CD8-positive, alpha-beta T cell (primary cell): ENCODE measurements at regions of chr7 and their contacts with region 1.

Region 1: DNA sequence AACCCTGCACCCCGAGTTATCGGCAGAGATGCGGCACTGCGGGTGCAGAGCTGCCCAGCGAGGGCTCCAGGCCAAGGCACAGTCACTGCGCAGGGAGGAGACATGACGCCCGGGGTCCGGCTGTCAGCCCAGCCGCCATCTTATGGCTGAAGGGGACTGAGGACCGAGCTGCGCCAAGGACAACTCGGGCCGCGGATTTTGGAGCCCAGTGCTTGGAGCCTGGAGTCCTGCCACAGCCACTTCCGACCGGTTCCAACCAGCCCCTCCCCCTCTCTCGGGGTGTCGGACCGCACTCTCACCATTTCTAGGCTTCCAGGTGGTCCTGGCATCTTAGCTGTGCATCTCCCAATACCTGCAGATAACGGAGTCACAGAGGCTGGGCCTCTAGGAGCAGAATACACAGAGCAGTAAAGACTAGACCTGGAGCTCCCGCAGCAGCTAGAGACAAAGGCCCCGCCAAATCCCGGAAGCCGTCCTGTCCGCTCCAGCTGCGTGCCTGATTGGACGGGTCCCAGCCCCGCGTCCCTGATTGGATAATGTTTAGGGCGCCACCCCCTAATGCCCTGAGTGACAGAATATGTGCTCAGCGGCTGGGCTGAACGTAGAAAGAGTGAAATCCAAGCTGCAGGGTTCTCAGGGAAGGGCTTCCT is at the start of gene ZNF680:
- DNase-seq: peak; percentile 78 to 92 (median 89)
- ATAC-seq: peak; percentile 98
- H3K4me3 ChIP-seq: peak within 1 kb of the TSS; percentile 84 to 96
- H3K4me3 Mint-ChIP-seq: peak within 1 kb of the TSS; percentile 99
- H3K27ac ChIP-seq: peak within 1 kb of the TSS; percentile 69 to 71
- H3K27ac Mint-ChIP-seq: peak within 1 kb of the TSS; percentile 97
- H3K4me1 ChIP-seq: peaks cover 10% of the 10 kb centered on the region
- H3K4me1 Mint-ChIP-seq: peaks cover 33% of the 10 kb centered on the region
- H3K27me3 ChIP-seq: no peaks in the 10 kb centered on the region
- H3K27me3 Mint-ChIP-seq: no peaks in the 10 kb centered on the region
- CTCF ChIP-seq: no peak
- total RNA-seq, gene ZNF680: 6.8 to 8.4 TPM

Region 2: DNA sequence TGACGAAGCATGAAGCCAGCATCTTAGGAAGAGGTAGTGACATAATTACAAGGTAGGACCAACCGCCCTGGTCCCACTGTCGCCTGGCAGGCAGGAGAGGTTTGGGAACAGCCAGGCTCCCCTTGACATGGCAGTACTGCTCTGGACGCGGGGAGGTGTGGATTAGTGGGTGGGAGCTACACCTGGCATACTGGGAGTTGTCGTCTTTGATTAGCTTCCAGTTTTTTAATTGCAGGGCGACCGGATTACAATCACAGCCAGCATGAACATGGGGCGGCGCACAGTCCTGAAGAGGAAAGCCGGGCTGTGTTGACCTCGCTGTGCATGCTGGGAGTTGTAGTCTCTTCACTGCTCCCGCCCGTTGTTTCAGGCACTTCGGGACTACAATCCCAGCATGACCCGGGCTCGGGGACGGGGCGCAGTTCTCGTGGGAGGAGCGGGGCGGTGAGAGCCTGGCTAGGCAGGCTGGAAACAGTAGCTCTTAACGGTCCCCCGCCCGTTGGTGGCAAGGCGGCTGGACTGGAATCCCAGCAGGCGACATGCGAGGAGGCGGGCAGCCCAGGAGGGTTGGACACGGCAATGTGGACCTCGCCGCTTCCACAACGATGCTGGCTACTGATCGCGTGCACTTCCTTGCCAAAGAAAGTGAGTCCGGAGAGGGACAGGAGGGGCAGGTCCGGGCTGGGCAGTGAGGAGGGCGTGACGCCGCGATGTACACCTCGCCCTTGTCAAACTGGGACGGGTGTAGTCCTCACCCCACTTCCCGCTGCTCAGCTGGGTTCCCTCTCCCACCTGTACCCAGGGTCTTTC is 662.2 kb before region 1 on chr7:
- CTCF ChIA-PET with region 1: no interaction called
- POLR2A ChIA-PET with region 1: no interaction called
- intact Hi-C with region 1: loop called in 1 of 2 experiments (anchors 10 kb)
- DNase-seq: peak; percentile 82 to 94 (median 88)
- ATAC-seq: peak; percentile 93
- H3K4me3 ChIP-seq: peak overlapping the region; percentile 67 to 98
- H3K4me3 Mint-ChIP-seq: peak overlapping the region; percentile 92
- H3K27ac ChIP-seq: peak overlapping the region; percentile 83 to 96
- H3K27ac Mint-ChIP-seq: peak overlapping the region; percentile 93
- H3K4me1 ChIP-seq: peaks cover 4% of the 10 kb centered on the region
- H3K4me1 Mint-ChIP-seq: peaks cover 6% of the 10 kb centered on the region
- H3K27me3 ChIP-seq: no peaks in the 10 kb centered on the region
- H3K27me3 Mint-ChIP-seq: no peaks in the 10 kb centered on the region
- CTCF ChIP-seq: no peak

Region 3: DNA sequence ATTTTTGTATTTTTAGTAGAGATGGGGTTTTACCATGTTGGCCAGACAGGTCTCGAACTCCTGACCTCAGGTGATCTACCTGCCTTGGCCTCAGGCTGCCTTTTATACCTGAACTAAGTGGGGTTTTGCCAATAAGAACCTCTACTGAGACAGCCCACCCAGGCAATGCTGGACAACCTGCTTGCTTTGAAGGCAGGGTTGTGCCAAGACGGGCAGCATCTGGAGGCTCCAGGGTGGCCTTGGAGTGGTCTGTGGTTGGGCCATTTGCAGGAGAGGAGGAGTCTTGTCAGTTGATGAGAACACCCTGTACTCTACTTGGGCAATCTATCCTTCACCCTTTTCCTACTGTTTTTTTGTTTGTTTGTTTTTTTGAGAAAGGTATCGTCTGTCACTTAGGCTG is 431.1 kb before region 1 on chr7:
- CTCF ChIA-PET with region 1: no interaction called
- POLR2A ChIA-PET with region 1: no interaction called
- intact Hi-C with region 1: no loop called
- DNase-seq: no peak
- ATAC-seq: no peak
- H3K4me3 ChIP-seq: no peak overlapping the region
- H3K4me3 Mint-ChIP-seq: no peak overlapping the region
- H3K27ac ChIP-seq: no peak overlapping the region
- H3K27ac Mint-ChIP-seq: no peak overlapping the region
- H3K4me1 ChIP-seq: no peaks in the 10 kb centered on the region
- H3K4me1 Mint-ChIP-seq: no peaks in the 10 kb centered on the region
- H3K27me3 ChIP-seq: no peaks in the 10 kb centered on the region
- H3K27me3 Mint-ChIP-seq: no peaks in the 10 kb centered on the region
- CTCF ChIP-seq: no peak

Region 4: GRCh38 chr7:64307254-64308015 is 255.3 kb before region 1 on chr7:
- CTCF ChIA-PET with region 1: no interaction called
- POLR2A ChIA-PET with region 1: interaction called, 18 read pairs
- intact Hi-C with region 1: loop called (anchors 2 kb)
- DNase-seq: peak; percentile 88 to 97 (median 94)
- ATAC-seq: peak; percentile 98
- H3K4me3 ChIP-seq: peak overlapping the region; percentile 71 to 80
- H3K4me3 Mint-ChIP-seq: peak overlapping the region; percentile 95
- H3K27ac ChIP-seq: peak overlapping the region; percentile 77 to 91
- H3K27ac Mint-ChIP-seq: peak overlapping the region; percentile 99
- H3K4me1 ChIP-seq: peaks cover 14% of the 10 kb centered on the region
- H3K4me1 Mint-ChIP-seq: peaks cover 14% of the 10 kb centered on the region
- H3K27me3 ChIP-seq: no peaks in the 10 kb centered on the region
- H3K27me3 Mint-ChIP-seq: no peaks in the 10 kb centered on the region
- CTCF ChIP-seq: no peak

Region 5: GRCh38 chr7:64665980-64666662 is 103.4 kb after region 1 on chr7 and contains the start of gene ZNF107:
- CTCF ChIA-PET with region 1: no interaction called
- POLR2A ChIA-PET with region 1: interaction called, 19 read pairs
- intact Hi-C with region 1: loop called (anchors 1 to 2 kb)
- DNase-seq: peak; percentile 73 to 94 (median 86)
- ATAC-seq: peak; percentile 95
- H3K4me3 ChIP-seq: peak within 1 kb of the TSS; percentile 93 to 95
- H3K4me3 Mint-ChIP-seq: peak within 1 kb of the TSS; percentile 96
- H3K27ac ChIP-seq: peak within 1 kb of the TSS; percentile 92 to 93
- H3K27ac Mint-ChIP-seq: peak within 1 kb of the TSS; percentile 96
- H3K4me1 ChIP-seq: peaks cover 14% of the 10 kb centered on the region
- H3K4me1 Mint-ChIP-seq: peaks cover 64% of the 10 kb centered on the region
- H3K27me3 ChIP-seq: no peaks in the 10 kb centered on the region
- H3K27me3 Mint-ChIP-seq: no peaks in the 10 kb centered on the region
- CTCF ChIP-seq: no peak
- total RNA-seq, gene ZNF107: 14.0 to 14.7 TPM

Region 6: DNA sequence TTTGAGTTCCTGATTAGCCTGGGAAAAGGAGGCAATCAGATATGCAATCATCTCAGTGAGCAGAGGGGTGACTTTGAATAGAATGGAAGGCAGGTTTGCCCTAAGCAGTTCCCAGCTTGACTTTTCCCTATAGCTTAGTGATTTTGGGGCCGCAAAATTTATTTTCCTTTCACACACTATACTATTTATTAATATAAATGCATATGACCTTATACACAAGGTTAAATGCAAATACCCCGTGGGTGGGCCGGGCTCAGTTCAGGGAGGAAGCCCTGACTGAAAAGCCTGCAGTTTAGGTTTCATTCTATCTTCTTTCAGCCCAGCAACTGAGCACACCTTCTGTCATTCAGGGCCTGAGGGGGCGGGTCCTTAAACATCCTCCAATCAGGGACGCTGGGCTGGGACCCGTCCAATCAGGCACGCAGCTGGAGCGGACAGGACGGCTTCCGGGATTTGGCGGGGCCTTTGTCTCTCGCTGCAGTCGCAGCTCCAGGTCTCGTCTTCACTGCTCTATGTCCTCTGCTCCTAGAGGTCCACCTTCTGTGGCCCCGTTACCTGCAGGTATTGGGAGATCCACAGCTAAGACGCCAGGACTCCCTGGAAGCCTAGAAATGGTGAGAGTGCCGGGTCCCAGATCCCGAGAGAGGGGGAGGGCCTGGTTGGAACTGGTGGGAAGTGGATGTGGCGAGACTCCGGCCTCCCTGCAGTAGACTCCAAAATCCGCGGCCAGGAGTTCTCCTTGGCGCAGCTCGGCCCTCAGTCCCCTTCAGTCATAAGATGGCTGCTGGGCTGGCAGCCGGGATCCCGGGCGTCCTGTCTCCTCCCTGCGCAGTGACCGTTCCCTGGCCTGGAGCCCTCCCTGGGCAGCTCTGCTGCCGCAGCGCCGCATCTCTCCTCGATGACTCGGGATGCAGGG is 340.3 kb after region 1 on chr7 and contains the start of gene ZNF273:
- CTCF ChIA-PET with region 1: no interaction called
- POLR2A ChIA-PET with region 1: no interaction called
- intact Hi-C with region 1: loop called (anchors 2 to 10 kb)
- DNase-seq: peak; percentile 82 to 94 (median 89)
- ATAC-seq: peak; percentile 100
- H3K4me3 ChIP-seq: peak within 1 kb of the TSS; percentile 71 to 98
- H3K4me3 Mint-ChIP-seq: peak within 1 kb of the TSS; percentile 97
- H3K27ac ChIP-seq: peak within 1 kb of the TSS; percentile 53 to 86
- H3K27ac Mint-ChIP-seq: peak within 1 kb of the TSS; percentile 96
- H3K4me1 ChIP-seq: peaks cover 30% of the 10 kb centered on the region
- H3K4me1 Mint-ChIP-seq: peaks cover 48% of the 10 kb centered on the region
- H3K27me3 ChIP-seq: no peaks in the 10 kb centered on the region
- H3K27me3 Mint-ChIP-seq: no peaks in the 10 kb centered on the region
- CTCF ChIP-seq: no peak
- total RNA-seq, gene ZNF273: 8.7 to 9.9 TPM